ENCODE measurements at regions of chr3 and their contacts with region 1.

Region 1: DNA sequence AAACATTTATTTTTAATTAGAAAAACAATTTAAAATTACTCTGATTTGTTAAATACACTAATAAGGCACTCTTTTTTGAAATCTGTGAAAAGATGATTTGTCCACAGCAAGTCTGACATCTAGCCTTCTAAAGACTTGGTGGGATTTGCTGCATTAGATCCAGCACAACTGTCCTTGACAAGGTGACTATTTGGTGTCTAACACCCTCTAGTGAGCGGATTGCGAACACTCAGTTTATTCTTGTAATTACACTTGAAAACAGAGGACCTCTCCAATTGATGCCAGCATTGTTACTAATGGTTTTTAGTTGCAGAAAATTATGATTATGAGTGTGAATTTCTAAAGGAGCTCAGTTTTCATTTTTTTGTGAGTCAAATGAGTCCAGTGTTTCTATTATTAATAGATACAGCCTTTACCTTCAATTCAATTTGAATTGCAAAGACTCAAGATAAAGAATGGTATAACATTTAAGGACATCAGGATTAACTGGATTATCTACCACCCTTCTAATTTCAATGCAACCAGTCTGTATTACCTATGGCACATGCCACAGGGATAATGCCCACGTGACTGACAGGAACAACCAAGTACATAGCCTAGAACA is 29.7 kb upstream of the STRIT1 start:
- DNase-seq: peak; percentile 33 to 36
- H3K4me3 ChIP-seq: no peak overlapping the region
- H3K27ac ChIP-seq: no peak overlapping the region
- H3K4me1 ChIP-seq: no peaks in the 10 kb centered on the region
- H3K27me3 ChIP-seq: no peaks in the 10 kb centered on the region
- CTCF ChIP-seq: peak in 5 of 6 experiments; percentile 36 to 78 (median 72)
- POLR2A ChIP-seq: no peak

Region 2: GRCh38 chr3:154334973-154335420 is 988.2 kb before region 1 on chr3:
- intact Hi-C with region 1: loop called (anchors 10 kb)
- DNase-seq: no peak
- H3K4me3 ChIP-seq: no peak overlapping the region
- H3K27ac ChIP-seq: no peak overlapping the region
- H3K4me1 ChIP-seq: no peaks in the 10 kb centered on the region
- H3K27me3 ChIP-seq: no peaks in the 10 kb centered on the region
- CTCF ChIP-seq: peak; percentile 20 to 68 (median 47)
- POLR2A ChIP-seq: no peak

Region 3: GRCh38 chr3:155485897-155486296 is 162.7 kb after region 1 on chr3:
- intact Hi-C with region 1: no loop called
- DNase-seq: no peak
- H3K4me3 ChIP-seq: no peak overlapping the region
- H3K27ac ChIP-seq: no peak overlapping the region
- H3K4me1 ChIP-seq: no peaks in the 10 kb centered on the region
- H3K27me3 ChIP-seq: no peaks in the 10 kb centered on the region
- CTCF ChIP-seq: no peak
- POLR2A ChIP-seq: no peak

Measured in thyroid gland (tissue), 4 donors.